ENCODE measurements at regions of chr14 and their contacts with region 1.

Region 1: DNA sequence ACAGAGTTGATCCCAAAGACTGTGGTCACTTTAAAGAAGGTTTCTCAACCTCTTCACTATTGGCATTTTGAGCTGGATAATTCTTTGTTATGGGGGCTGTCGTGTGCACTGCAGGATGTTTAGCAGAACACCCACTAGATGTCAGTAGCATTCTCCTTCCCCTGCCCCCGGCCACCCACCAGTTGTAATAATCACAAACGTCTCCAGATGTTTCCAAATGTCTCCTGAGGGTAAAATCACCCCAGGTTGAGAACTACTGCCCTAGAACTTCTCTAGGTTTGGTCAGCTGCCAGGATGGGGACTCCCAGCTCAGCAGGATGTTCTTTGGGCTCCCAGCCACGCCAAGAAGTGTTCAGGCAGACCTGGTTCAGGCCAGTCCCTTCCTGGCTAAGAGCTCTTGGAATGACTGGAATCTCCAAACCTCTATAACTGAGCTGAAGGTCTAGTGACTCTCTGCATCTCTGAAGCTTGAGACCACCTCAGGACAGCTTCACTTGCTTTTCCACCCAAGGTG is 12.5 kb upstream of the AJUBA start:
- DNase-seq: peak; percentile 38 to 66 (median 66)
- H3K4me3 ChIP-seq: no peak overlapping the region
- H3K27ac ChIP-seq: no peak overlapping the region
- H3K4me1 ChIP-seq: peaks cover 0 to 4% (median under 1%) of the 10 kb centered on the region in 4 experiments
- H3K27me3 ChIP-seq: no peaks in the 10 kb centered on the region

Region 2: DNA sequence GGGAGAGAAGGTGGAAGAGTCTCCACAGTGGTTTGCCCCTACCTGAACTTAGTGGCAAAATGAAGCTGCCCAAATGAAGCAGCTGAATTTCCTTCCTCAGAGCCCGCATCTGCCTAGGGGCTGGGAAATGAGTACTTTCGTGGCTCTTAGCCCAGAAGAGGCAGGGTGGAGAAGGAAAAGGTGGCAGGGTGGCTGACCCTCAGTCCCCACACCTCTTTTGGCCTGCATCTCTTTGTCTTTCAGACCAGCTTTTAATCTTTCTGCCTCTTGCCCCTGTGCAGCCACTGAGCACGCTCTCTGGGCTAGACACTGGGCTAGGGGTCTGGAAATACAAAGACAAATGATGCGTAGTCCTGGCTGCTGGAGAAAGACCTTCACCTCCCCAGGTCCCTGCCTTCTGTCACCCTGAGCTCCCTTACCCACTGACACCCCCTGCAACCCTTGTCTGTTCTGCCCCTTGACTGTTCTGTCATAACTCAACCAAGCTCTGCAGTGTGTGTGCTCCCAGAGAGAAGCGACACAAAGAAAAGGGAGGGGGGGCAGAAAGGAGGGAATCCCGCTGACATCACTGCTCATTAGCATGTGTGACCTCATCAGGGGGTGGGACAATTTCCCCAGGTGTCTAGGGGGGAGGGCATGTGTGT is 112.2 kb before region 1 on chr14:
- CTCF ChIA-PET with region 1: no interaction called
- POLR2A ChIA-PET with region 1: no interaction called
- DNase-seq: peak; percentile 17 to 41 (median 37)
- H3K4me3 ChIP-seq: no peak overlapping the region
- H3K27ac ChIP-seq: no peak overlapping the region
- H3K4me1 ChIP-seq: peaks cover 0 to 24% (median 14%) of the 10 kb centered on the region in 4 experiments
- H3K27me3 ChIP-seq: peaks cover 0 to 61% (median 17%) of the 10 kb centered on the region in 5 experiments

Region 3: DNA sequence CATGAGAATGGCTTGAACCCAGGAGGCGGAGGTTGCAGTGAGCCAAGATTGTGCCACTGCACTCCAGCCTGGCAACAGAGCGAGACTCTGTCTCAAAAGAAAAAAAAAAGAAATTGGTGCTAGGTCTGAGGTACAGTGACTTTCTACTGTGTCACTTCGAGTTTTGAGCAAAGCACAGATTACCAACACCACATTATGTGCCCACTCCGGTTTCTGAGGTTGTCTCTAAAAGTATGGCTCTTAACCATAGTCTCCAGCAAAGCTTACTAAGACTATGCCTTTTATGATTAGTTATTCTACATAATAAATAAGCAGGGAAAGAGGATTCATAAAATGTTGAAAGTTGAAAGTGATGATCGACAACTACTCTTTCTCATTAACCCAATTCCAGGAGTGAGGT is 83.9 kb before region 1 on chr14:
- CTCF ChIA-PET with region 1: no interaction called
- POLR2A ChIA-PET with region 1: no interaction called
- DNase-seq: no peak
- H3K4me3 ChIP-seq: no peak overlapping the region
- H3K27ac ChIP-seq: no peak overlapping the region
- H3K4me1 ChIP-seq: peaks cover 0 to 4% (median 2%) of the 10 kb centered on the region in 4 experiments
- H3K27me3 ChIP-seq: no peaks in the 10 kb centered on the region

Region 4: DNA sequence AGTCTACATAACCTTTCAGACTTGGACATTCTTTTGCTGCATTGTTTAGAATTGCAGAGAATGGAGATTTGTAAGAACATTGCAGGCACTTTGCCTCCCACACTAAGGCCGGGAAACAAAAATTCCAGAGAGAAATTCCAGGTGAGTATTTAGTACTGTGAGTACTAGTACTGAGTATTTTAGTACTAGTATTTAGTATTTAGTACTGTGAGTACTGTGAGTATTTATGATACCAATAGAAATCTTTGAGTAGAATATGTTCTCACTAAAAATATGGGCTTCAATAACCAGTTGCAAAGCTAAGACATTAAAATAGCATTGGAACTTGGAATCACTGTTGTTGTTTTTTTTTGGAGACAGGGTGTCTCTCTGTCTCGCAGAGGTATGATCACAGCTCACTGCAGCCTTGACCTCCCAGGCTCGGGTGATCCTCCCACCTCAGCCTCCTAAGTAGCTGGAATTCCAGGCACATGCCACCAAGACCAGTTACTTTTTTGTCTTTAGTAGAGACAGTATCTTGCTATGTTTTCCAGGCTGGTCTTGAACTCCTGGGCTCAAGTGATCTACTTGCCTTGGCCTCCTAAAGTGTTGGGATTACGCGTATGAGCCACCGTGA is 32.6 kb before region 1 on chr14:
- CTCF ChIA-PET with region 1: interaction called, 319 read pairs
- POLR2A ChIA-PET with region 1: no interaction called
- DNase-seq: no peak
- H3K4me3 ChIP-seq: no peak overlapping the region
- H3K27ac ChIP-seq: no peak overlapping the region
- H3K4me1 ChIP-seq: peaks cover 0 to 4% (median 2%) of the 10 kb centered on the region in 4 experiments
- H3K27me3 ChIP-seq: no peaks in the 10 kb centered on the region

Region 5: GRCh38 chr14:23006544-23007419 is 12.0 kb after region 1 on chr14:
- CTCF ChIA-PET with region 1: interaction called, 47 read pairs
- POLR2A ChIA-PET with region 1: interaction called, 7 read pairs
- DNase-seq: peak; percentile 98 to 99 (median 99)
- H3K4me3 ChIP-seq: peak overlapping the region; percentile 47 to 92 (median 86)
- H3K27ac ChIP-seq: peak overlapping the region; percentile 89 to 95
- H3K4me1 ChIP-seq: peaks cover 8 to 34% (median 28%) of the 10 kb centered on the region in 4 experiments
- H3K27me3 ChIP-seq: no peaks in the 10 kb centered on the region

Region 6: GRCh38 chr14:23015618-23016017 is 20.8 kb after region 1 on chr14:
- CTCF ChIA-PET with region 1: interaction called, 23 read pairs
- POLR2A ChIA-PET with region 1: interaction called, 4 read pairs
- DNase-seq: no peak
- H3K4me3 ChIP-seq: no peak overlapping the region
- H3K27ac ChIP-seq: no peak overlapping the region
- H3K4me1 ChIP-seq: peaks cover 0 to 5% (median 0%) of the 10 kb centered on the region in 4 experiments
- H3K27me3 ChIP-seq: no peaks in the 10 kb centered on the region

Region 7: DNA sequence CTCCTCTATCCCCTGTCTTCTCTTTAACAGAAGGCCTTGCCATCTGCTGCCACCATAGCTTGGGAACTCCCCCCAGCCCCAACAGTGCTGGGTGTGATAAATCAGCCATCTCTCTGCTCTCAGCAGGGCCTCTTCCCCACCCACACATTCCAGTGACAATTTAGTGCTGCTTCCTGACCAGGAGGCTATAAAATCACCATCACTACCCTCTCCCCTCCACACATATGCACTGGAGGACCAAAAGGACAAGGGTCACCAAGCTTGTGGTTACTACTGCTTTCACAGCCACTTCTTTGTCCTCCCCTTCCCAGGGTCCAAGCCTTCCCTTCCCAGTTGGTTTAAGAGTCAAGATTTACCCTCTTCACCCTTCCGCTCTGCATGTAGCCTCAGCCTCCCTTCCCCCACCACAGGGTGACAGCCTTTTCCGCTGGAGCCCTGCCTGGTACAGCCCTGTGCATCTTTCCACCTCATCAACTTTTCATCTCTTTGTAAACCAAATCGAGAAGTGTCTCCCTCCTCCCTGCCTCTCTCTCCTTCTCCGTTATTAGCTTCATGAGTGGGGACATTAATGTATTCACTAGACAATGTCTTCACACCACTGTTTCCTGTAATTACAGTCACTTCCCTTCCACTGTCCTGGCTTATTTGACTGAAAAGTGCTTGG is 30.5 kb after region 1 on chr14:
- CTCF ChIA-PET with region 1: interaction called, 27 read pairs
- POLR2A ChIA-PET with region 1: interaction called, 4 read pairs
- DNase-seq: no peak
- H3K4me3 ChIP-seq: no peak overlapping the region
- H3K27ac ChIP-seq: no peak overlapping the region
- H3K4me1 ChIP-seq: peaks cover 0 to 7% (median 4%) of the 10 kb centered on the region in 4 experiments
- H3K27me3 ChIP-seq: no peaks in the 10 kb centered on the region

Region 8: GRCh38 chr14:23034483-23035302 is 39.9 kb after region 1 on chr14 and contains the start of gene PSMB5:
- CTCF ChIA-PET with region 1: interaction called, 933 read pairs
- POLR2A ChIA-PET with region 1: interaction called, 3 read pairs
- DNase-seq: peak; percentile 97 to 99 (median 98)
- H3K4me3 ChIP-seq: peak within 1 kb of the TSS; percentile 76 to 97 (median 89)
- H3K27ac ChIP-seq: peak within 1 kb of the TSS; percentile 88 to 95
- H3K4me1 ChIP-seq: peaks cover 6 to 12% (median 11%) of the 10 kb centered on the region in 4 experiments
- H3K27me3 ChIP-seq: no peaks in the 10 kb centered on the region

Region 9: GRCh38 chr14:23160924-23161538 is 166.2 kb after region 1 on chr14:
- CTCF ChIA-PET with region 1: no interaction called
- POLR2A ChIA-PET with region 1: no interaction called
- DNase-seq: peak; percentile 54 to 83 (median 83)
- H3K4me3 ChIP-seq: peak overlapping the region in 1 of 7 experiments; percentile 40
- H3K27ac ChIP-seq: peak overlapping the region in 1 of 2 experiments; percentile 57
- H3K4me1 ChIP-seq: peaks cover 4 to 30% (median 26%) of the 10 kb centered on the region in 4 experiments
- H3K27me3 ChIP-seq: no peaks in the 10 kb centered on the region

Region 10: GRCh38 chr14:23269193-23269592 is 274.4 kb after region 1 on chr14:
- CTCF ChIA-PET with region 1: no interaction called
- POLR2A ChIA-PET with region 1: no interaction called
- DNase-seq: no peak
- H3K4me3 ChIP-seq: no peak overlapping the region
- H3K27ac ChIP-seq: no peak overlapping the region
- H3K4me1 ChIP-seq: no peaks in the 10 kb centered on the region
- H3K27me3 ChIP-seq: peaks cover 0 to 3% (median 0%) of the 10 kb centered on the region in 5 experiments

Measured in common myeloid progenitor, CD34-positive (primary cell).